Pancreas (tissue), 10 donors: ENCODE measurements at regions of chr1 and their contacts with region 1.

Region 1: DNA sequence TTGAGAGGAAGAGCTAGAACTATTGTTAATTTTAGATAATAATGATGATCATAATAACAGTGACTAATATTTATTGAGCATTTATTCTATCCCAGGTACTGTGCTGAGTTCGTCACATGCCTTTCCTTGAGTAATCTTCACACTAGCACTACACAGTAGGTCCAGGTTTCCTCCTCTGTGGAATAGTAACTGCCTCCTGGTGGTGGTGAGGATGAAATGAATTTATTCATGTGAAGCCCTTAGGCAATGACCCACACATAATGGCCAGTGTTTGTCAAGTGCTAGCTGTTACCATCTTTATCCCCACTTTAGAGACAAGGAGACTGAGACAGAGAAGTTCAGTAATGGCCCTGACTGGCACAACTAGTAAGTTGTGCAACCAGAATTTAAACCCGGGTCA is 5.9 kb downstream of the NIPAL3 start:
- DNase-seq: no peak
- ATAC-seq: no peak
- H3K4me3 ChIP-seq: no peak overlapping the region
- H3K27ac ChIP-seq: no peak overlapping the region
- H3K4me1 ChIP-seq: peaks cover 21 to 34% (median 30%) of the 10 kb centered on the region in 3 donors
- H3K27me3 ChIP-seq: no peaks in the 10 kb centered on the region
- CTCF ChIP-seq: no peak

Region 2: GRCh38 chr1:24364975-24365678 is 56.4 kb before region 1 on chr1:
- intact Hi-C with region 1: no loop called
- DNase-seq: no peak
- ATAC-seq: peak in 2 of 4 donors; percentile 26 to 73
- H3K4me3 ChIP-seq: no peak overlapping the region
- H3K27ac ChIP-seq: no peak overlapping the region
- H3K4me1 ChIP-seq: no peaks in the 10 kb centered on the region
- H3K27me3 ChIP-seq: no peaks in the 10 kb centered on the region
- CTCF ChIP-seq: no peak

Region 3: GRCh38 chr1:24374891-24375786 is 46.4 kb before region 1 on chr1:
- intact Hi-C with region 1: no loop called
- DNase-seq: no peak
- ATAC-seq: no peak
- H3K4me3 ChIP-seq: no peak overlapping the region
- H3K27ac ChIP-seq: no peak overlapping the region
- H3K4me1 ChIP-seq: no peaks in the 10 kb centered on the region
- H3K27me3 ChIP-seq: no peaks in the 10 kb centered on the region
- CTCF ChIP-seq: no peak

Region 4: GRCh38 chr1:24491577-24492360 is 70.3 kb after region 1 on chr1:
- intact Hi-C with region 1: loop called in 1 of 3 experiments (anchors 10 kb)
- DNase-seq: no peak
- ATAC-seq: no peak
- H3K4me3 ChIP-seq: no peak overlapping the region
- H3K27ac ChIP-seq: no peak overlapping the region
- H3K4me1 ChIP-seq: no peaks in the 10 kb centered on the region
- H3K27me3 ChIP-seq: no peaks in the 10 kb centered on the region
- CTCF ChIP-seq: no peak